ENCODE measurements at regions of chr15 and their contacts with region 1.

Region 1: DNA sequence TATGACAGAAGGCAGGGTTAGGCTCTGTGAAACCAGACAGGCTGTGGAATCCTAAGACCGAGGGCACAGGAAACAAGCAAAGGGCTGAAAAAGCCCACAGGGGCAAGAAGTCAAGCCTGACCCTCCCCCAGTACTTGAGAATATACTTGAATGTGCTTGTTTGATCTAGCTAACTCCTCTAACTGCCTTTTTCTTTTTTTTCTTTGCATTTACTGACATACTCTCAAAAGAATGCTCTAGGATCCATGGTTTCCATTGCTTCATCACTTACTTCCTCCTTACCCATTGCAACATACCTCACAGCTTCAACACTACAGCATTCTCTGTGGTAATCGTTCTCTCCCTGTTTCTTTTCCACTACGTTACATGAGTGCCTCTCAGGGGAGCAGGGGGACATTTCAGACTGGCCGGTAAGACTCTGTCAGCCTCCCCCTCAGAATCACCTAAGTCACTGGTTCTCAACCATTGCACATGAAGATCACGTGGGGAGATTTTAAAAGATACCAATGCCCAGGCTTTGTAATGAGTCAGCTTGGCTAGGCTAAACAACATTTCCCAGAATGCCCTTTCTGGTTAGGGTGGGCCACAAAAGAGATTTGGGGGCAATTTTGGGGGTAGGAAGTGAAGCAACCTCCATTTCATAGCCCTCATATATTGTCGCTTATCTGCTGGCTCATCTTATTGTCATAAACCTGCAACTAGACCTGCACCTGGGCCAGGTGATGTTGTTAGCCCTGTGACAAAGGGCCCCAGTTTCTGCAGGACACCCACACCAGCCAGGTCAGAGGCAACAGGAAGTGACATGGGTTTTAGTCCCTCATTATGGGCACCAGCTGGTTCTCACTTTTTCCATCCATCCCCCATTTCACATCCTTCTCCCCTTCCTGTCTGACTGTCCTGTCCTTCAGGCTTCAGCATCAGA is 24.6 kb upstream of the RSL24D1 start:
- DNase-seq: peak; percentile 80 to 96 (median 90)
- H3K4me3 ChIP-seq: peak overlapping the region; percentile 4 to 70 (median 23)
- H3K4me3 Mint-ChIP-seq: peak overlapping the region; percentile 62 to 87
- H3K27ac ChIP-seq: peak overlapping the region; percentile 86 to 87
- H3K27ac Mint-ChIP-seq: peak overlapping the region; percentile 94 to 99 (median 98)
- H3K4me1 ChIP-seq: peaks cover 79 to 87% of the 10 kb centered on the region in 2 donors
- H3K4me1 Mint-ChIP-seq: peaks cover 84% of the 10 kb centered on the region
- H3K27me3 ChIP-seq: no peaks in the 10 kb centered on the region
- H3K27me3 Mint-ChIP-seq: peaks cover 0 to 1% (median 0%) of the 10 kb centered on the region in 3 donors
- CTCF ChIP-seq: no peak

Region 2: GRCh38 chr15:55179141-55179540 is 42.2 kb before region 1 on chr15:
- intact Hi-C with region 1: no loop called
- DNase-seq: no peak
- H3K4me3 ChIP-seq: no peak overlapping the region
- H3K4me3 Mint-ChIP-seq: no peak overlapping the region
- H3K27ac ChIP-seq: peak overlapping the region in 1 of 2 donors; percentile 10
- H3K27ac Mint-ChIP-seq: peak overlapping the region in 4 of 7 donors; percentile 10 to 73 (median 34)
- H3K4me1 ChIP-seq: peaks cover 4 to 10% of the 10 kb centered on the region in 2 donors
- H3K4me1 Mint-ChIP-seq: peaks cover 11% of the 10 kb centered on the region
- H3K27me3 ChIP-seq: no peaks in the 10 kb centered on the region
- H3K27me3 Mint-ChIP-seq: no peaks in the 10 kb centered on the region
- CTCF ChIP-seq: no peak

Region 3: GRCh38 chr15:55290528-55291057 is 69.2 kb after region 1 on chr15:
- intact Hi-C with region 1: loop called (anchors 1 to 2 kb)
- DNase-seq: peak; percentile 75 to 87 (median 81)
- H3K4me3 ChIP-seq: peak overlapping the region; percentile 72 to 99 (median 95)
- H3K4me3 Mint-ChIP-seq: peak overlapping the region; percentile 94 to 96
- H3K27ac ChIP-seq: peak overlapping the region; percentile 95 to 99
- H3K27ac Mint-ChIP-seq: peak overlapping the region; percentile 89 to 99 (median 91)
- H3K4me1 ChIP-seq: peaks cover 36 to 55% of the 10 kb centered on the region in 2 donors
- H3K4me1 Mint-ChIP-seq: peaks cover 50% of the 10 kb centered on the region
- H3K27me3 ChIP-seq: no peaks in the 10 kb centered on the region
- H3K27me3 Mint-ChIP-seq: peaks cover 0 to 1% (median 0%) of the 10 kb centered on the region in 3 donors
- CTCF ChIP-seq: peak; percentile 90

Region 4: GRCh38 chr15:55407949-55408791 is 186.8 kb after region 1 on chr15 and contains the starts of genes CCPG1 and PIERCE2:
- intact Hi-C with region 1: loop called in 1 of 2 experiments (anchors 10 kb)
- DNase-seq: peak; percentile 87 to 91 (median 89)
- H3K4me3 ChIP-seq: peak within 1 kb of the TSS; percentile 83 to 96 (median 89)
- H3K4me3 Mint-ChIP-seq: peak within 1 kb of the TSS; percentile 85 to 97
- H3K27ac ChIP-seq: peak within 1 kb of the TSS; percentile 92
- H3K27ac Mint-ChIP-seq: peak within 1 kb of the TSS; percentile 89 to 97 (median 94)
- H3K4me1 ChIP-seq: peaks cover 41 to 52% of the 10 kb centered on the region in 2 donors
- H3K4me1 Mint-ChIP-seq: peaks cover 46% of the 10 kb centered on the region
- H3K27me3 ChIP-seq: no peaks in the 10 kb centered on the region
- H3K27me3 Mint-ChIP-seq: no peaks in the 10 kb centered on the region
- CTCF ChIP-seq: peak; percentile 90
- polyA plus RNA-seq, gene CCPG1: 21.1 to 196 (median 145) TPM
- polyA plus RNA-seq, gene PIERCE2: 0.13 to 1.3 (median 0.61) TPM

Region 5: DNA sequence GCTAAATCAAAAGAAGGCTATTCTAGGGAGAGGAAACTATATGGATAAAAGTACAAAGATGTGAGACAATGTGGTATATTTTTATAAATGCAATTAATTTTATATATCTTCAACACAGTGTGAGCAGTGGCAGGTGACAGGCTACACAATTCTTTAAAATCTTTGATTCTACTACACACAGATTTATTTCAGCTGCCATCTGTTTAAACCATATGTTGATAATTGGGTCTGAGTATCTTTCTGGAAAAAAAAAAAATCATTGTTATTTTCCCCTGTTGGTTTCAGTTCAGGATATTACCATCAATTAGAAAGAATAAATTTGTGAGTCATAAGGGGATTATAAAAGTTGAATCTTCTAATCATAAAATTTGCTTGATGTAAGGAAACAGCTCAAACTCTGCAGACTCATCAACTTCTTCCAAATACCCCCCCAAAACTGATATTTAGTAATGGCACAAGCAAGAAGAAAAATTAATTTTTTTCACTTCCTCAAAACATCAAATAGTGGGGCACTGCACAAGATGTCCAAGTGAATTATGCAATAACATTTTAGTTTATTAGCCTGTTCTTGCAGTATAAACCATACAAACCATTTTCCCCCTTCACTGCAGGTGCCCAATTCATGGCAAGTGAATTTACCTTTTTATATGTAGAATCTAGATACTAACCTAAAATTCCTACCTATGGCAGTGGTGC is 199.0 kb after region 1 on chr15:
- intact Hi-C with region 1: loop called in 1 of 2 experiments (anchors 10 kb)
- DNase-seq: peak in 2 of 3 donors; percentile 43 to 49
- H3K4me3 ChIP-seq: no peak overlapping the region
- H3K4me3 Mint-ChIP-seq: no peak overlapping the region
- H3K27ac ChIP-seq: no peak overlapping the region
- H3K27ac Mint-ChIP-seq: peak overlapping the region in 4 of 7 donors; percentile 23 to 61 (median 48)
- H3K4me1 ChIP-seq: peaks cover 12 to 18% of the 10 kb centered on the region in 2 donors
- H3K4me1 Mint-ChIP-seq: peaks cover 19% of the 10 kb centered on the region
- H3K27me3 ChIP-seq: no peaks in the 10 kb centered on the region
- H3K27me3 Mint-ChIP-seq: no peaks in the 10 kb centered on the region
- CTCF ChIP-seq: no peak

Region 6: DNA sequence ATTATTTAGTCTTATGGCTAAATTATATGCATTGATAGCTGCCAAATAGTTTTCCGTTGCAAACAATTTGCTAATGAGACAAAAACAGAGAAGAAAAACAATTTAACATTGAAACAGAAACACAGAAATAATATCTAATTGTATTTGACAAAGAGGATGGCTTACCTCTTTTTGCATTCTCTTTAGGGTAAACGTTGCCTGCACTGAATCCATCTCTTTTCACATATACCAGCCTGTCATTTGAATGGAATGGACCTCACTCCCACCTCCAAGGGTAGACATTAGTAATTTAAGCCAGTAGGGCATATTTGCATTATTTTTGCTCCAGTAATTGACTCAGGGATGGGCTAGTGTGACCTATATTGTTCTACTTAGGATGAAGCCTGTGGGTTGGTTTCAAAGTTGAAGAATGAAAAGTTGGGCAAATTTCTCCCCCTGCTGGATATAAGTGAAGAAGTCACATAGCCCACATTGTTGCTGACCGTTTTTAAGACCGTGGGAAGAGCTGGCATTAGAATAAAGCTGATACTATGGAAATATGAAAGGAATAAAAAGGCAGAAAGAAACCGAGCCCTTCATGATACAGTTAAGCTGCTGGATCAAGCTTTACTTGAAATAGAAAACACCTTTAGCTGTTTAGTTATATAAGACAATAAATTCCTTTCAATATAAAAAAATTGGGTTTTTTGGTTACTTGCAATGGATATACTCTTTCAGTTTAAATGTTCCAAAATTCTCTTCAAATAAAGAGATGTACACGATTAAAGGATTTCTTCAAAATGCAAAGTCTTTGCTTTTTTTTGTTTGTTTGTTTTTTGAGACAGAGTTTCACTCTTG is 213.9 kb after region 1 on chr15:
- intact Hi-C with region 1: loop called in 1 of 2 experiments (anchors 10 kb)
- DNase-seq: peak; percentile 15 to 55 (median 37)
- H3K4me3 ChIP-seq: no peak overlapping the region
- H3K4me3 Mint-ChIP-seq: no peak overlapping the region
- H3K27ac ChIP-seq: no peak overlapping the region
- H3K27ac Mint-ChIP-seq: no peak overlapping the region
- H3K4me1 ChIP-seq: no peaks in the 10 kb centered on the region
- H3K4me1 Mint-ChIP-seq: peaks cover 4% of the 10 kb centered on the region
- H3K27me3 ChIP-seq: no peaks in the 10 kb centered on the region
- H3K27me3 Mint-ChIP-seq: peaks cover 0 to 7% (median 1%) of the 10 kb centered on the region in 3 donors
- CTCF ChIP-seq: peak; percentile 81

Measured in CD14-positive monocyte (primary cell).